ENCODE measurements at regions of chr3 and their contacts with region 1.

Region 1: GRCh38 chr3:73727117-73727821 is 102.5 kb upstream of the PDZRN3 start:
- DNase-seq: no peak
- ATAC-seq: no peak
- H3K4me3 ChIP-seq: no peak overlapping the region
- H3K27ac ChIP-seq: no peak overlapping the region
- H3K4me1 ChIP-seq: no peaks in the 10 kb centered on the region
- H3K27me3 ChIP-seq: no peaks in the 10 kb centered on the region
- CTCF ChIP-seq: no peak
- EP300 ChIP-seq: no peak
- POLR2A ChIP-seq: no peak
- RAD21 ChIP-seq: no peak

Region 2: GRCh38 chr3:73094125-73094524 is 633.1 kb before region 1 on chr3:
- CTCF ChIA-PET with region 1: no interaction called
- POLR2A ChIA-PET with region 1: no interaction called
- in situ Hi-C with region 1: no loop called
- intact Hi-C with region 1: loop called (anchors 5 kb)
- DNase-seq: peak; percentile 23
- ATAC-seq: peak; percentile 80
- H3K4me3 ChIP-seq: no peak overlapping the region
- H3K27ac ChIP-seq: no peak overlapping the region
- H3K4me1 ChIP-seq: no peaks in the 10 kb centered on the region
- H3K27me3 ChIP-seq: no peaks in the 10 kb centered on the region
- CTCF ChIP-seq: 0 out of 2 replicates have a peak, but pooled peaks have one; percentile 22
- EP300 ChIP-seq: no peak
- POLR2A ChIP-seq: no peak
- RAD21 ChIP-seq: no peak

Region 3: DNA sequence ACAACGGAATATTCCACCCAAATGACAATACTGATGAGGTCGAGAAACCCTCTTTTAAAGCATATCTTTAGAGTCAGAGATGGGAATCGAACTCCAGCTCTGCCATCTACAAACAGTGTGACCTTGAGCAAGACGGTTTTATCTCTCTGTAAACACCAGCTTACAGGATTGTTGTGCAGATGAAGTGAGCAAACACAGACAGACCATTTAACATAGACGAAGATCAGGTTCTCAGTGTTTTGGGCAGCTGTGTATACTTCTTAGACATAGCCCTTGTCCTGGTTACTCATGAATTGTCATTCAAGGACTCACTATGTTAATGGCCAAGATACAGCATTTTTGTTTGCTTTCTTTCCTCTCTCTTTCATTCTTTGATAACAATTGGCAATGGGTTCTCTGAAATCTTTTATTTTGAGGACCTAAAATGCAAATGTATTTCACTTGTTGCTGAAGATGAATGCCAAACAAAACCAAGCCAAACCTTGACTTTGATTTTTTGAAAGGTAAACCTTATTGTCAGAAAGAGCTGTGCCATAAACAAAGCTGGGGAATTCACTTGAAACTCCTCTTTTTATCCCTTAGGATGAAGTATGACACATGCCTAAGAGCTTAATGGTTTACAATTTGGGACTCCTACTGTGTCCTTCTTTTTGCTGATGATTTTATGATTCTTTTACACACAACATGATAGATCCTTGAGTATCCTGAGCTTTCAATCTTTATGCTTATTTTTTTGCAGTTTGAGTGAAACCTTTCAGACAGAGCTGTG is 147.5 kb after region 1 on chr3:
- CTCF ChIA-PET with region 1: no interaction called
- POLR2A ChIA-PET with region 1: no interaction called
- in situ Hi-C with region 1: no loop called
- intact Hi-C with region 1: no loop called
- DNase-seq: no peak
- ATAC-seq: no peak
- H3K4me3 ChIP-seq: no peak overlapping the region
- H3K27ac ChIP-seq: no peak overlapping the region
- H3K4me1 ChIP-seq: no peaks in the 10 kb centered on the region
- H3K27me3 ChIP-seq: no peaks in the 10 kb centered on the region
- CTCF ChIP-seq: no peak
- EP300 ChIP-seq: no peak
- POLR2A ChIP-seq: no peak
- RAD21 ChIP-seq: no peak

Measured in HepG2 (cell line).